Caco-2 (cell line): ENCODE measurements at regions of chr10 and their contacts with region 1.

Region 1: DNA sequence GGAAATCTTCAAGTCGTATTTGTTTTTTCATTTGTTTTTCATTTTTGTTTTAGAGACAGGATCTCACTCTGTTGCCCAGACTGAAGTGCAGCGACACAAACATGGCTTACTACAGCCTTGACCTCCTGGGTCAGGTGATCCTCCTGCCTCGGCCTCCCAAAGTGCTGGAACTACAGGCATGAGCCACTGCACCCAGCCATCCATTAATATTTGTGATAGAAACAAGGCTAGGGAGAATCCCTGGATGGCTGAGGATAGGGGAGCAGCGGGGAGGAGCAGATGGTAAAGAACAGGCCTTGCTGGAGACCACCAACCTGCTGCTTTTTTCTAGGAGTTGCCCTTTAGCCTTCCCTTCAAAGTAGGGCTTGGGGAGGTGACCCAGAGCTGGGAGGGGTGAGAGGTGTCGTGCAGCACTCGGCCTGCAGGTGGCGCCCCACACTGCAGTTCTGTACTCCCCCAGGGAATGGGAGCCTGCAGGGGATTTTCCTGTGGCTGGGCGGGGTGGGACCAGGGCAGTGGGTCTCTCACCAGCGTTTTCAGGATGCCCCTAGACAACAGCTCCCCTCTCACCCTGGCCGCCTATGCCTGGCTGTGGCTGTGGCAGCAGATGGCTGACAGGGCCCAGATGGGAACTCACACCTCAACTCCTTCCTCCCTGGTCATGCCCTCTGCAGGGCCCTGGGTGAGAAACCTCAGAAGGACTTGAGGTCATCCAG is 12.6 kb upstream of the CDH23 start:
- DNase-seq: peak; percentile 80 to 89
- H3K4me3 ChIP-seq: no peak overlapping the region
- H3K4me3 Mint-ChIP-seq: no peak overlapping the region
- H3K27ac Mint-ChIP-seq: no peak overlapping the region
- H3K4me1 ChIP-seq: no peaks in the 10 kb centered on the region
- H3K4me1 Mint-ChIP-seq: no peaks in the 10 kb centered on the region
- H3K27me3 ChIP-seq: no peaks in the 10 kb centered on the region
- H3K27me3 Mint-ChIP-seq: peaks cover 6% of the 10 kb centered on the region
- CTCF ChIP-seq: peak; percentile 97 to 98

Region 2: GRCh38 chr10:71396084-71396720 is 12.1 kb after region 1 on chr10:
- CTCF ChIA-PET with region 1: interaction called, 12 read pairs
- POLR2A ChIA-PET with region 1: no interaction called
- intact Hi-C with region 1: no loop called
- DNase-seq: peak in 1 of 2 experiments; percentile 59
- H3K4me3 ChIP-seq: peak overlapping the region; percentile 36
- H3K4me3 Mint-ChIP-seq: peak overlapping the region; percentile 60
- H3K27ac Mint-ChIP-seq: no peak overlapping the region
- H3K4me1 ChIP-seq: peaks cover 18% of the 10 kb centered on the region
- H3K4me1 Mint-ChIP-seq: no peaks in the 10 kb centered on the region
- H3K27me3 ChIP-seq: peaks cover 4% of the 10 kb centered on the region
- H3K27me3 Mint-ChIP-seq: peaks cover 32% of the 10 kb centered on the region
- CTCF ChIP-seq: peak; percentile 23 to 50

Region 3: DNA sequence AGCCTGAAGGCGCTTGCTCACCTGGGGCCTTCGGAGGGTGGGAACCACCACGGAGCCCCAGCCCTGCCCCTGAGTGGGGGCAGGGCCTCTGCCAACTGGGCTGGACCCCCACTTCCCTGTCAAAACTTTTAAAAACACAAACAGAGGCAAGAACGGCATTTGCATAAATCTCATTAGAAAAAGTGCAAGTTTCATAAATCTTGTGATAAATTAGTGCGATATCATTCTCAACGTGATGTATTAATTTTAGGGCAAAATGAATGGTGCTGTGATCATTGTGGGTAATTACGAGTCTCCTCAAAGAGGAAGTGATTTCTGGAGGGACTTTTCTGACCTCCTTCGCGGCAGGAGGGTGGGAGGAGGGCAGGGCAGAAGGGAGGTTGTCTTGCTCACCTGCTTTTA is 110.9 kb after region 1 on chr10:
- CTCF ChIA-PET with region 1: no interaction called
- POLR2A ChIA-PET with region 1: no interaction called
- intact Hi-C with region 1: no loop called
- DNase-seq: no peak
- H3K4me3 ChIP-seq: no peak overlapping the region
- H3K4me3 Mint-ChIP-seq: no peak overlapping the region
- H3K27ac Mint-ChIP-seq: no peak overlapping the region
- H3K4me1 ChIP-seq: no peaks in the 10 kb centered on the region
- H3K4me1 Mint-ChIP-seq: no peaks in the 10 kb centered on the region
- H3K27me3 ChIP-seq: no peaks in the 10 kb centered on the region
- H3K27me3 Mint-ChIP-seq: peaks cover 4% of the 10 kb centered on the region
- CTCF ChIP-seq: no peak

Region 4: DNA sequence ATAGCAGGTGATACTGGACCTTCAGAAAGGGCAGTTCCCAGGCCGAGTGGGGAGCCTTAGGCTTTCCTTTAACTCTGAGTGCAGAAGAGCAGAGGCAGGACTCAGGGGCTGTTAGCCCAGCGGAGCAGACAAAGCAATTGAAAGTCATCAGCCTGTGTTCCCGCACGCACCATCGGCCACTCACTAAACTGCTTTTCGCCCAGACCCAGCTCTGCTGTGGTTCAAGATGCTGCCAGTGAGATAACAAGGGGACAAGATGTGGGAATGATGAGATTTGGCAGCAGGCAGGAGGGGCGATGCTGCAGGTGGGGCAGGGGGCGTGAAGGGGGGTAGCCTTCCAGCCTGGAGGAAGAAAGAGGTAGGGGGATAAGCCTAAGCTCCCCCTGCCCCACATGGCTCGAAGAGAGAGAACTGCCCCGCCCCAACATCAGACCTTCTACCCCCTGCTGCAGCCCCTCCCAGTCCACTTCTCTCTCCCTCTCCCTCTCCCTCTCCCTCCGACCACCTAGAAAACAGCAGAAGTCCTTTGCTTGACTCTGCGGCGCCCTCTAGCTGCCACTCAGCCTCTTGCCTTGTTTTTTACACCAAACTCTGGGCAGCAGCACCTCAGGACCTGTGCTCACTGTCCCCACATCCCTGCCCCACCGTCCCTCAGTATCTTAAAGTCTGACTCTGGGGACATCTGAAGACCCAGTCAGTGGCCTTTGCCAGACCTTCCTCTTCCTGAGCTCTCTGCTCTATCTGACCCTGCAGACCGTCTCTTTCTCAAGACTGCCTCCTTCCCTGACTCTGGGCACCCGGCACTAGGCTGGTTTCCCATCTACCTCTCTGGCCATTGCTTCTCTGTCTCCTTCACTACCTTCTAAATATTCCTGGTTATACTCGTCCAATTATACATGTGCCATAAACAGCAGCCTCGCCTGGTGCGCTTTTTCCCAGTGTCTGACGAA is 225.0 kb after region 1 on chr10:
- CTCF ChIA-PET with region 1: interaction called, 8 read pairs
- POLR2A ChIA-PET with region 1: no interaction called
- intact Hi-C with region 1: loop called (anchors 2 kb)
- DNase-seq: peak; percentile 83 to 86
- H3K4me3 ChIP-seq: no peak overlapping the region
- H3K4me3 Mint-ChIP-seq: no peak overlapping the region
- H3K27ac Mint-ChIP-seq: no peak overlapping the region
- H3K4me1 ChIP-seq: peaks cover 14% of the 10 kb centered on the region; the same call in 1 of the 2 replicates
- H3K4me1 Mint-ChIP-seq: no peaks in the 10 kb centered on the region
- H3K27me3 ChIP-seq: no peaks in the 10 kb centered on the region
- H3K27me3 Mint-ChIP-seq: no peaks in the 10 kb centered on the region
- CTCF ChIP-seq: peak; percentile 90 to 97